ENCODE measurements at regions of chr2 and their contacts with region 1.

Region 1: GRCh38 chr2:158214438-158214837 is 112.8 kb downstream of the UPP2 start:
- DNase-seq: no peak
- ATAC-seq: peak; percentile 72
- H3K4me3 Mint-ChIP-seq: no peak overlapping the region
- H3K27ac Mint-ChIP-seq: no peak overlapping the region
- H3K4me1 Mint-ChIP-seq: peaks cover 35% of the 10 kb centered on the region
- H3K27me3 Mint-ChIP-seq: no peaks in the 10 kb centered on the region
- CTCF ChIP-seq: no peak

Region 2: DNA sequence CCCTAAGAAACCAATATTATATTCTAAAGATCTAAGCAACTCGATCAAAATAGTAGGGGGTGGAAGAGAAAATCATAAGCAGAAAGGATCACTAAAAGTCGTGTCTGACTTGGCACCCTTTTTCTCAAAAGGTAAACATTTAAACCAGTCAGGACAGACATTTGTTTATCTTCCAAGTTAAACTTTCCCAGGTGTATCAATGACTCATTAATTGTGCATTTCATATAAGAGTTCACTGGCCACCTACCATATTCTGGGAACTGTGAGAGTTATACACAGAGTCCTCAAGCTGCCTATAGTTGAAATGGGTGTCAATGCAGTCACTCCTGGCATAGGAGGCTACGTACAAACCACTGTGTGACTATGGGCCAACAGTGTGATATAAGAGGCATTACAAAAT is 333.5 kb before region 1 on chr2:
- CTCF ChIA-PET with region 1: no interaction called
- POLR2A ChIA-PET with region 1: no interaction called
- intact Hi-C with region 1: no loop called
- DNase-seq: no peak
- ATAC-seq: no peak
- H3K4me3 Mint-ChIP-seq: no peak overlapping the region
- H3K27ac Mint-ChIP-seq: no peak overlapping the region
- H3K4me1 Mint-ChIP-seq: peaks cover 8% of the 10 kb centered on the region
- H3K27me3 Mint-ChIP-seq: peaks cover 3% of the 10 kb centered on the region
- CTCF ChIP-seq: no peak

Region 3: DNA sequence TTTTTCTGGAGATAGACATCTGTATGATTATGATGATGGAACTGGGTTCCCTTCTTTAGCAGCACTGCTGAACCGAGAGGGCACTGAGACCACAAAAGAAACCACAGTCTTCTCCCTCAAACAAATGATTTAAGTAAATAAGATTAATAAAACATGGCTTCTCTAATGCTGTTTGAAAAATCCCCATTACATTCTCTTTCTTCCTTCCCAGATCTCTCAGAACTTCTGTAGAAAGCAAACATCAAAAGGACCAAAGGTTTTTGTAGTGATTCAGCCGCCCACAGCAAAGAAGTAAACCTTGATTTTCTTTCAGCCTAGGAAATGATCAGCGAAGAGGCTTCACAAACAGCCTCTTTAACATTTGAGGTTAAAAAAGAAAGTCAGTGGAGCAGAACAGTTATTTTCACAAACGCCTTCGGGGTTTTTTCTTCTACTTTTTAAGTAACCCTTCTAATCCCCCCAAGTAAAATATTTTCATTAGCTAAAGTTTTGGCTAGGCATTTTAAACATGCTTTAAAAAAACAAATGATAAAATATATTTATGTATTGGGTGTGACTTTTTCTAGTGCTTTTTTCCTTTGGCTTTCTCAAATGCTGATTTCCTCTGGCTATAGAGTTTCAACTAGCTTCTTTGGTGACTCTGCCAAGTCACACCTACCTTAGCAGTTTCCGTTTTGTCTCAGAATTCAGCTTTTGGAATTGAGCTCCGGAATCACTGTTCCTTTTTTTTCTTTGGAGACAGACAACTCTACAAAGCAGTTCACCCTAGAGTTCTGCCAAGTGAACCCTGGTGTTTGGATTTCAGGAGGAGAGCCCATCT is 23.2 kb before region 1 on chr2:
- CTCF ChIA-PET with region 1: interaction called, 4 read pairs
- POLR2A ChIA-PET with region 1: no interaction called
- intact Hi-C with region 1: loop called (anchors 2 kb)
- DNase-seq: no peak
- ATAC-seq: peak; percentile 82
- H3K4me3 Mint-ChIP-seq: peak overlapping the region; percentile 80
- H3K27ac Mint-ChIP-seq: peak overlapping the region; percentile 94
- H3K4me1 Mint-ChIP-seq: peaks cover 31% of the 10 kb centered on the region
- H3K27me3 Mint-ChIP-seq: no peaks in the 10 kb centered on the region
- CTCF ChIP-seq: no peak

Region 4: DNA sequence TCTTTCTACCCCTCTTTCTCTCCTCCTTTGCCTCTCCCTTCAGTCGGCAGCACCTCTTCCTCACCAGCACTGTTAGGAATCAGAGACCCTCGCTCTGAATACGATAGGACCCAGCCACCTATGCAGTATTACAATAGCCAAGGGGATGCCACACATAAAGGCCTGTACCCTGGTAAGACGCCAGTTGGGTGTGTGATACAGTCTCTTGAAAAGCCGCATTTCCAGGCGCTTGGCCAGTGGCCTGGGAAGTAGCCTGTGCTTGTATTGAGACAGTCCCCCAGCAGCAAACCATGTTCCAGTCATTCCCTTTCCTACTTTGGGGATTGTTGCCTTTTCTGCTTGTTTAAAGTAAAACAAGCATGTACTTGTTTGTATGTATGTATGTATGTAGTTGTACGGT is 462.3 kb after region 1 on chr2:
- CTCF ChIA-PET with region 1: no interaction called
- POLR2A ChIA-PET with region 1: no interaction called
- intact Hi-C with region 1: no loop called
- DNase-seq: no peak
- ATAC-seq: no peak
- H3K4me3 Mint-ChIP-seq: no peak overlapping the region
- H3K27ac Mint-ChIP-seq: no peak overlapping the region
- H3K4me1 Mint-ChIP-seq: no peaks in the 10 kb centered on the region
- H3K27me3 Mint-ChIP-seq: no peaks in the 10 kb centered on the region
- CTCF ChIP-seq: no peak

Measured in activated B cell treated with CpG ODN at 0.5 μM for 24 hours (primary cell).